Ovary (tissue), 10 donors: ENCODE measurements at regions of chr14 and their contacts with region 1.

Region 1: DNA sequence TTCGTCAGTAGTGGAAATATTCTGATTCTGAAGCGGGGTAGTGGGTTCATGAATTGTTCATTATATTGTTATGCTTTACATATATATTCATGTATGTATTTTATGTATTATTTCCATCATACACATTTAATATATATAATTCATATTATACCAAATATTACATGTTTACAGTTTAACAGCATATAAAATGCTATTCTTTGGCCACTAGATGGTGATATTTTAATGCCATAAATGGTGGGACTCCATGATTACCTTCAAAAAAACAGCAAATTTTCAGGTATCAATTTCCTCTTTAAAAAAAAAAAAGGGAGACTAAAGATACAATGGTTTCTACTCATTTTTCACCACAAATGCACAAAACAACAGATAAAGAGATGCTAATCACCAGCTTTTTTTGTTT is 41.0 kb downstream of the BDKRB1 start:
- DNase-seq: no peak
- H3K4me3 ChIP-seq: no peak overlapping the region
- H3K27ac ChIP-seq: no peak overlapping the region
- H3K4me1 ChIP-seq: no peaks in the 10 kb centered on the region
- H3K27me3 ChIP-seq: no peaks in the 10 kb centered on the region
- CTCF ChIP-seq: no peak
- EP300 ChIP-seq: no peak
- POLR2A ChIP-seq: no peak

Region 2: DNA sequence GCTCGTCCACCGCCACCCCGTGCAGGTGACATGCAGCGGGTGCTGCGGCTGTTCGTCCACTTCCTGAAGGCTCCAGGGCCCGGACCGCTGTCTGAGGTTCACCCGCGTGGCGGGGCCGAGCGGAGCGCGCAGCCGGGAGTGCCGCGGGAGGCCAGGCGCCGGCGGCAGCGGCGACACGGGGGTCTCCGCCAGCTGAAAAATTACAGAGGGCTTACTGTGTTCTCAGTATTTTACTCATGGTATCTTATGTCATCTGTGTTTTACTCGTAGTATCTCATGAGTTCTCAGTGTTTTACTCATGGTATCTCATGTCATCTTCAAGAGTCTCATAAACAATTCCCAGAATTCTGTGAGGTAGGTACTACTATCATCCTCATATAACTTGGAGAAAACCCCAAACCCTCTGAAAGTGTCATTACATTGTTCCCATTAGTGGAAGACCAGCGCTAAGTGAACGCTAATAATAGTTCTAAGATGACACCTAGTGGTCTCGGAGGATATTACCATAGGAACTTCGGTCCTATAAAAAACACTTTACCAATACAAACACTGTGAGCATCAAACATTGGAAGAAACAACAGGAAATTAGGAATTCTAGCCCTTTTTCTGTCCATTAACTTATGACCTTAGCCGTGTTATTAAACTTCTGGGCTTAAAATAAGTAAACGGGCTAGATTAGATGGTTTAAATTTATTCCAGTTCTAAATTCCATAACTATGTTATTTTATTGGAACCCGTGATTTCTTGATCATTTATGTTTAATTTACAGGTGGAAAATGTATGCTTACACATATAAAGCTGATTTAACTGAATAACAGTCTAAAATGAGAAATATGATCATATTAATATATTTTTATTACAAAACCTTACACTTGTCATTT is 127.3 kb after region 1 on chr14:
- intact Hi-C with region 1: loop called in 2 of 4 experiments (anchors 5 to 10 kb)
- DNase-seq: peak in 2 of 5 donors; percentile 20 to 43
- H3K4me3 ChIP-seq: peak overlapping the region; percentile 6
- H3K27ac ChIP-seq: no peak overlapping the region
- H3K4me1 ChIP-seq: no peaks in the 10 kb centered on the region
- H3K27me3 ChIP-seq: no peaks in the 10 kb centered on the region
- CTCF ChIP-seq: peak; percentile 50 to 69 (median 66)
- EP300 ChIP-seq: no peak
- POLR2A ChIP-seq: no peak